Sigmoid colon (tissue), 7 donors: ENCODE measurements at regions of chr18 and their contacts with region 1.

Region 1: GRCh38 chr18:50287441-50288347 is at the start of gene CXXC1:
- DNase-seq: peak; percentile 99
- H3K4me3 ChIP-seq: peak within 1 kb of the TSS; percentile 68 to 85 (median 75)
- H3K27ac ChIP-seq: peak within 1 kb of the TSS; percentile 81 to 88 (median 86)
- H3K4me1 ChIP-seq: peaks cover 0 to 12% (median 8%) of the 10 kb centered on the region in 4 donors
- H3K27me3 ChIP-seq: no peaks in the 10 kb centered on the region
- CTCF ChIP-seq: peak; percentile 43 to 49 (median 47)
- EP300 ChIP-seq: peak in 1 of 4 donors; percentile 11
- POLR2A ChIP-seq: peak in 1 of 2 donors; percentile 22
- total RNA-seq, gene CXXC1: 34.2 to 58.9 (median 51.1) TPM

Region 2: DNA sequence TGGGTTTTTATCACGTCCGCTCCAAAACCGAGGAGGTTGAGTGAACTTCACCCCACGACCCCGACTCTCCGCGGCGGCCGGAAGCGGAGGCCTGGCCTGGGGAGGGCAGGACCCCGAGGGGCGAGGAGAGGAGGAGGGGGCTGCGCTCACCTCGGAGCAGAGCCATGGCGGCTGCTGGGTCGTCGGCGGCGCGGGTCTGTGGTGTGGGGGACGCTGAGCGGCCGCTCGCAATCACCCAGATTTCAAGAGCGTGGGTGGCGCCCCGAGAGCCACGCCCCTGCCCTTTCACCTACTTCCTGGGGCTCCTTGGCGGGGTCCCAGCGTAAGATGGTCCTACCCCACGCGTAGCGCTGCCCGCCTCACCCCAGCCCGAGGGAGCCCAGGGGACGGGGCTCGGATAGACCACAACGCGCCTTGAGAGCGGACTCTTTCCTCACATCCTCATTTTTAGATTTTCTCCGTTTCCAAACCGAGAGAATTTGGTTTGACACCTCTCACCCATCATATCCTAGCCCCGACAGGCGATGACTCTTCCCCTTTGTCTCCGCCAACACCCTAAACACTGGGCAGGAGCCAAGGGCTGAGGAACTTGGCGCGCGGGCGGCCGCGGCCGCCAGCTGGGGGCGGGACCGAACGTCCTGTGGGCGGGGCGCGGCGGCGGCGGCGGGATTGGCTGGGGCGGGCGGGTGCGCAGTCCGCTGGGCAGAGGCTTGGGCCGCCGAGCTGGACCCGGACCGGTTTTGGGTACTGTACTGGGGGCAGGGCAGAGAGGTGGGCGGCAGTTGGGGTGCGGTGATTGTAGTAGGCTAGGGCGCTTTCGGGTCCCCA is 474.2 kb before region 1 on chr18 and contains the start of gene ACAA2:
- intact Hi-C with region 1: loop called (anchors 5 kb)
- DNase-seq: peak; percentile 95
- H3K4me3 ChIP-seq: peak within 1 kb of the TSS; percentile 71 to 89 (median 82)
- H3K27ac ChIP-seq: peak within 1 kb of the TSS; percentile 91 to 96 (median 94)
- H3K4me1 ChIP-seq: peaks cover 0 to 28% (median 23%) of the 10 kb centered on the region in 4 donors
- H3K27me3 ChIP-seq: no peaks in the 10 kb centered on the region
- CTCF ChIP-seq: no peak
- EP300 ChIP-seq: no peak
- POLR2A ChIP-seq: peak; percentile 55 to 72
- total RNA-seq, gene ACAA2: 61.8 to 87.7 (median 63.2) TPM

Region 3: GRCh38 chr18:50158923-50159653 is 128.6 kb before region 1 on chr18:
- intact Hi-C with region 1: no loop called
- DNase-seq: no peak
- H3K4me3 ChIP-seq: no peak overlapping the region
- H3K27ac ChIP-seq: no peak overlapping the region
- H3K4me1 ChIP-seq: no peaks in the 10 kb centered on the region
- H3K27me3 ChIP-seq: peaks cover 0 to 19% (median 0%) of the 10 kb centered on the region in 3 donors
- CTCF ChIP-seq: no peak
- EP300 ChIP-seq: no peak
- POLR2A ChIP-seq: no peak